Right ventricle myocardium inferior (tissue), 1 donor: ENCODE measurements at regions of chr1 and their contacts with region 1.

Region 1: DNA sequence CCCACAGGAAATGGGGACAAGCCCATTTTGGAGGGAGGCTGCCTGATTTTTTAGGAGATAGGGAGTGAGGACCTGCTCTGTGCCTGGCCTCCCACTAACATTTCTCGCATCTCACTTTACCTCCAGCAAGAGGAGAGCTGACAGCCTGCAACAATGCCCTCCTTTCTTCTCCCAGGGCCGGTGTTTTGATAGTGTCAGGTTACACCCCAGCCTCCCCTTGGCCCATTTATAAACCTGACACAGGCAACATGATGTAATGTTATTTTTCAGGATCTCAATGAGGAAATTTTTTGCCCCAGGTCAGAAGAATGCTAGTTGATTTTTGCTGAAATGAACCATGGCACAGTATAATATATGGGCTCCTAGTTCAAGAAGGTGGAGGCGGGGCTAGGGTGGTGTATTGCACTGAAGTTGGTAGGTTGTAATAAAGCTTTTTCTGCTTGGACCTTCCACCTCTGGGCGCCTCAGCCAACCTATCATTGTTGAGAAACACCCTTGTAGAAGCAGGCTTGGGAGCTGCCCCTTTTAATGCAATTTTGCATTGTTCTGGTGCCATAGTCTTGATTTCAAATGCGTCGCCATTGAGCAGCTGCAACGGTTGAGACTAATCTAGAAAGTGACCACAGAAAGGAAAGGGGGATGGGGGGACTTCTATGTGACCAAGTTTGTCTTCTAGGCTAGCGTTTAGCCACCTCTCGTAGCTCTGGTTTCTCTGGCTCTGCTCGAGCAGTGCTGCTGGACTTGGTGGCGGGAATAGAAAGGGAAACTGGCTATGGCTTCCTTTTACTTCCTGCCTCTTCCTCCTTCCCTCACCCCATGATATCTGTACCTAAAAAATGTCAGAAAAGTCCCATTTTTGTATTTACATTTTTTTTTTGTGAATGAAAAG is 53.0 kb downstream of the PBX1 start:
- DNase-seq: no peak
- ATAC-seq: peak; percentile 32

Region 2: DNA sequence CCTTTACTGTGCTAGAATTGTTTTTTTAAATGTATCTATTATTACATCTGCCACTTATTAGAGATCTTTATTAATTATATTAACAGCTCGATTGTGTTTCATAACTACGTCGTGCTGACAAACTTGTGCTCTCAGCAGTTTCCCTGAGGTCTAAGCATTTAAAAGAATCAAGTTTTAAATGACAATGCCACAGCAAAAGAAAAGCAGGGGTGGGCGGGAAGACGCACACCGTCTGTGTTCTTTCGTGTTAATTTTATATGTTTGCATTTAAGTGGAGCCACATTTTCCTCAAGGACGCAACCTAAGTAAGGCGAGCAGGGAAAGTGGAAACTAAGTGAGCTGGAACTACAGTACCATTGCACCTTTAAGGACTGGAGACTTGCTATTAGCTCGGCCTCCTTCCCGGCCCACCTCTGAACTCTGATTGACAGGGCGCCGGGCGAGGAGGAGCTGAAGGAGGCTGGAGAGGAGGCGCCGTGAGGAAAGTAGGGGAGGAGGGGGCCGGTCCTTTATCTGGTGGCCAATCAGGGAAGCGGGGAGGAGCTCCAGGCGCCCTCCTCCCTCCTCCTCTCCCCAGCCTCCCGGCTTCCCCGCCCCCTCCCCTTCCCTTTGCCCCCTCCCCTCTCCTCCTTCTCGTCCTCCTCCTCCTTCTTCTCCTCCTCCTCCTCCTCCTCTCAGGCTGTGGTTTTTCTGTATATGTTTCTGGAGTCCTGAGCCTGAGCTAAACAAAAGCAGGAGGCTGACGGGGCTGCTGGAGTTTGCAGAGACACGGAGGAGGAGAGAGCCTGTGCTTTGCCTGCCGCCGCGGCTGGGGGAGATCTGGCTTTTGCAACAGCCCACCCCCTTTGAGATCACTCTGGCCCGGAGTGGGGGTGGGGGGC is 53.3 kb before region 1 on chr1 and contains the start of gene PBX1:
- intact Hi-C with region 1: loop called (anchors 5 kb)
- DNase-seq: peak; percentile 98
- ATAC-seq: peak; percentile 99
- total RNA-seq, gene PBX1: 78.8 TPM

Region 3: GRCh38 chr1:164576291-164577271 is 35.4 kb before region 1 on chr1:
- intact Hi-C with region 1: loop called (anchors 5 kb)
- DNase-seq: no peak
- ATAC-seq: peak; percentile 76